AG04449 (cell line): ENCODE measurements at regions of chr4 and their contacts with region 1.

Region 1: DNA sequence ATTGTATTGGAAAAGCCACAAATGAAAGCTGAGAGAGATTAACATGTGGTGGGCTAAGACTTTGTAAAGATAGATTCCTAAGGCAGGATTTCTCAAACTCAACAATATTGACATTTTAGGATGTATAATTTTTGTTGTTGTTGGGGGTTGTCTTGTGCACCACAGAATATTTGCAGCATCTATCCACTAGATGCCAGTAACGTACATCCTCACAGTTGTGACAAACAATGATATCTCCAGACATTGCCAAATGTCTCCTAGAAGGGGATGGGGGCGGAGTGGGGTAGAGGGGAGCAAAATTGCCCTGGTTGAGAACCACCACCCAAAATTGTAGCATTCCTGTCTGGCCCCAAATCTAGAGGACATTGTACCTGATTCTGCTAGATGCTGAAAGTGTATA is 14.7 kb upstream of the CBR4 start:
- DNase-seq: no peak
- H3K4me3 ChIP-seq: no peak overlapping the region
- CTCF ChIP-seq: peak; percentile 59

Region 2: DNA sequence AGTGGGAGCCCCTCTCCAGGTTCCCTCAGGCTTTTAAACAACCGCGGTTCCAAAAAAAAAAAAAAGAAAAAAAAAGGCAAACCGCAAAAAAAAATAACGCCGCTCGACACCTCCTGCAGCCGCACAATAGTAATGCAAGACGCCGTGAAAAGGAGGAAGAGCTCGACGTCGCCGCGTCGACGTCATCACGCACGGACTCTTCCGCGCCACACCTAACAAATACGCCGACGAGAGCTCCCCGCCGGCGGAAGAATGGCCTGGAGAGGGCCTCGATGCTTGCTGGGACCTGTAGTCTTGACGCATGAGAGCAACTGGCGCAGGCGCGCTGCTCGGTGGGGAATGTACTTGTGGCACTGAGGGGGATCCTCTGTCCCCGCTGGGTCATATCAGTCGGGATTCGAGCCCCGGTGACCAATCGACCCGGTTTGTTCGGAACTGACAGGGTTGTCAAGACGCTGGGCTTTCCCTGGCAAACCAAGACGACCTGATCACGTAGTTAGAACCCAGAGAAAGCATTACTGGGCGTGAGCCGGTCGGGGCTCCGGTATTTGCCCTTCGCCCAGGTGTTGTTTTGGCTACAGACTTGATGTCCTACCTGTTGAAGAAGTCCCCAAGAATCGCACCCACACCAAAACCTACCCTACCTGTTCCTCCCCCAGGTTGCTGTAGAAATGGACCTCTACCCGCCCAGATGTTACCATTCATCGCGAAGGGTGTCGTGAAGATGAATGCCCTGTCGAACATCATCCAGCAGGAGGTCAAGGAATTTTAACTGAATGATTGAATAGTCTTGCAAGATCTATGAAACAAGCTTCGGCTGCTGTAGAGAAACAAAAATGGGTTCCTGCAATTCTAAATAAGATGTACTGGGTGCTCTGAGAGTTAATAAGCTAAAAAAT is 14.4 kb before region 1 on chr4 and contains the start of gene CBR4:
- CTCF ChIA-PET with region 1: interaction called, 12 read pairs
- POLR2A ChIA-PET with region 1: no interaction called
- DNase-seq: peak; percentile 94
- H3K4me3 ChIP-seq: peak within 1 kb of the TSS; percentile 77
- CTCF ChIP-seq: peak; percentile 6

Region 3: DNA sequence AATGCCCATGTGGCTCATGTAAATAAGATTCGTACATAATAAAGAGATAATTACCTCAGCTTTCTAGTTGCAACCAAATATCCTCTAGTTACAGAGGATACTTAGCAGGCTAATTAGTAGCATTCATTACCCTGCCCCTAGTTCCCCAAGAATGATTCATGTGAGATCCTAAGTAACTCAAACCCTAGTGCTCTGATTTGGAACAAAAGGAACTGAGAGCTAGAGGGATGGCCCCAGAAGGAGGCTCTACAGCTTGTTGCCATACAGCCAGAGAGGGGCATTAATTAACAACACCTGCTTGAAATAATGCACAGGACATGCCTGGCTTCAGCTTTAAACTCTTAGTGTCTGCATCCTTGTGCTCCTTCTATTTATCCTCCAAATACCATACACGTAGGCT is 17.8 kb after region 1 on chr4:
- CTCF ChIA-PET with region 1: interaction called, 11 read pairs
- POLR2A ChIA-PET with region 1: no interaction called
- DNase-seq: no peak
- H3K4me3 ChIP-seq: no peak overlapping the region
- CTCF ChIP-seq: no peak

Region 4: GRCh38 chr4:169270810-169271691 is 246.3 kb after region 1 on chr4 and contains the start of gene SH3RF1:
- CTCF ChIA-PET with region 1: interaction called, 23 read pairs
- POLR2A ChIA-PET with region 1: no interaction called
- DNase-seq: no peak
- H3K4me3 ChIP-seq: peak within 1 kb of the TSS; percentile 85
- CTCF ChIP-seq: peak; percentile 50